Activated CD4-positive, alpha-beta T cell treated with anti-CD3 and anti-CD28 coated beads, Interleukin-2, amount 10 ng/mL, durations not matched to agents 24 days and 14 days (primary cell): ENCODE measurements at regions of chr5 and their contacts with region 1.

Region 1: GRCh38 chr5:76582230-76583162 is 40.7 kb downstream of the F2RL2 start:
- DNase-seq: no peak
- H3K4me3 Mint-ChIP-seq: no peak overlapping the region
- H3K27ac Mint-ChIP-seq: peak overlapping the region; percentile 62
- H3K4me1 Mint-ChIP-seq: peaks cover 25% of the 10 kb centered on the region
- H3K27me3 Mint-ChIP-seq: no peaks in the 10 kb centered on the region

Region 2: GRCh38 chr5:76337953-76338451 is 244.5 kb before region 1 on chr5:
- intact Hi-C with region 1: loop called (anchors 5 kb)
- DNase-seq: peak; percentile 87
- H3K4me3 Mint-ChIP-seq: no peak overlapping the region
- H3K27ac Mint-ChIP-seq: no peak overlapping the region
- H3K4me1 Mint-ChIP-seq: peaks cover 34% of the 10 kb centered on the region
- H3K27me3 Mint-ChIP-seq: no peaks in the 10 kb centered on the region